H1 (cell line): ENCODE measurements at regions of chr22 and their contacts with region 1.

Region 1: DNA sequence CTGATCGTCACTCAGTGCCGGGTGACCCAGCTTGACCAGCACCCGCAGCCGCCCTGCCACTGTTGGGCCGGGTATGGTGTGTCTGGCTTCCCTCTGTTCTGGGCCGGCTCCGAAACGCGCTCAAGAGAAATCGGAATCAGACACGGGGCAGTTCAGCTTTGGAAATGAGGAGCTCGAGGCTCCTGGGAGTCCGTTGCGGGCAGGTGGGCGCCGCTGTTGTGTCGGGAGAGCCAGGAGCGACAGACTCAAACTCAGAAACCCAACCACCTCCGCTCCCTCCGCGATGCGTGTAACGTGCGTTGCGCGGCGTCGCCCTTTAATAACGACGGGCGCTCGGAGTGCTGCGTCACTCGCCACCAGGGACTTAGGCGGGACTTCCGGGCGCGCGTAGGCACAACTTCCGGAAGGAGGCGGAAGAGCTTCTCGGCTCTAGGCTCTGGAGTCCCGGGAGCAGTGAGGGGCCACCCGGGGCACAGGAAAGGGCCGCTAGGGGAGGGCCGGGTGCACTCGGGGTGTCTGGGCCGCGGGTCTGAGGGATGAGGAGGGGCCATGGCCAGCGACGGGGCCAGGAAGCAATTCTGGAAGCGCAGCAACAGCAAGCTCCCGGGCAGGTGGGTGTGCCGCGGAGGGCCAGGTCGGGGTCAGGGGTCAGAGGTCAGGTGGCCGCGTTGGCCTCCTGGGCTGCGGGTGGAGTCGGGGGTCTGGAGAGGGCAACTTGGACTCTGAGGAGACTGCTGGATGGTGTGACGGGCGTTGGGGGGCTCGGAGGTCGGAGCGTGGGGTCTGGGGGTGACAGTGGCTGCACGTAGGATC is at the start of gene TBC1D22A:
- DNase-seq: peak; percentile 63 to 94
- H3K4me3 ChIP-seq: peak within 1 kb of the TSS; percentile 85 to 98 (median 92)
- H3K27ac ChIP-seq: peak within 1 kb of the TSS; percentile 90
- H3K4me1 ChIP-seq: peaks cover 0 to 4% (median 0%) of the 10 kb centered on the region in 4 experiments; a peak in 4 of 7 replicates
- H3K27me3 ChIP-seq: no peaks in the 10 kb centered on the region
- CTCF ChIP-seq: no peak
- EP300 ChIP-seq: peak in 1 of 2 experiments; percentile 83; a peak in 1 of 3 replicates
- POLR2A ChIP-seq: peak; percentile 93 to 96
- RAD21 ChIP-seq: no peak
- total RNA-seq, gene TBC1D22A: 18.4 and 19.0 TPM in 2 replicates

Region 2: DNA sequence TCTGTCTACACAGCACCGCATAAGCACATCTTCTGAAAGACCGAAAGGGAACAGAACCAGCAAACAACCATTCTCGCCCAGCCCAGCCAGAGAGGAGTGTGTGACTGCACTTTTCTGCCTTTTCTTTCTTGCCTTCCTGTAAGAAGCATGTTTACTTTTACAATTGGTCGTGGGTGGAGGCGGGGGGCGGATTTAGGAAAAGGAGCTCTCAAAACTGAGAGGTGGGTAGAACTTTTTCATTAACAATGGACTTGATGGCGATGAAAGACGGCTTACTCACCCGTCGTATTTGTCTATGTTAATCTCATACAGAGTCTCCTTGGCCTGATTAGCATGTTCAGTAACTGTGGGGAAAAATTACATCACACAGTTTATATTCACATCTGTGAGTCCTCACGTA is 51.6 kb before region 1 on chr22:
- CTCF ChIA-PET with region 1: no interaction called
- POLR2A ChIA-PET with region 1: no interaction called
- DNase-seq: no peak
- H3K4me3 ChIP-seq: no peak overlapping the region
- H3K27ac ChIP-seq: no peak overlapping the region
- H3K4me1 ChIP-seq: no peaks in the 10 kb centered on the region
- H3K27me3 ChIP-seq: no peaks in the 10 kb centered on the region
- CTCF ChIP-seq: no peak
- EP300 ChIP-seq: no peak
- POLR2A ChIP-seq: no peak
- RAD21 ChIP-seq: no peak

Region 3: DNA sequence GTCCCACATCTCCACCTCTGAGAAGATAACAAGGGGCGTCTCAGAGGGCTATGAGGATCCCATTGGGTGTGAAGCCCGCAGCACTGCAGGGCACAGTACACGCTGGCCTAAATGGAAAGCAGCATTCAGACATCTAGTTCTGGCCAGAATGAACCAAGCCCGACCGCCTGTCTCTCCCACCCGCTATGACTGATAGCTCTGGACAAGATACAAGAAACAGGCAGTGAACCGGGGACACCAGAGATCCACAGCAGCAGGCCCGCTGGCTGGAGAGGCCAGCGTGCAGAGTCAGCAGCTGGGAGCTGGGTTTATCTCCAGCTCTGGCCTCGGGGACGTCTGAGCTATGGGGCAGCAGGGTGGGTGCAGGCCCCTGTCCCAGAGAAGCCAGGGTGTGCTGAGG is 34.0 kb before region 1 on chr22:
- CTCF ChIA-PET with region 1: interaction called, 5 read pairs
- POLR2A ChIA-PET with region 1: interaction called, 11 read pairs
- DNase-seq: no peak
- H3K4me3 ChIP-seq: no peak overlapping the region
- H3K27ac ChIP-seq: no peak overlapping the region
- H3K4me1 ChIP-seq: peaks cover 0 to 11% (median 9%) of the 10 kb centered on the region in 4 experiments; a peak in 6 of 7 replicates
- H3K27me3 ChIP-seq: no peaks in the 10 kb centered on the region
- CTCF ChIP-seq: no peak
- EP300 ChIP-seq: no peak
- POLR2A ChIP-seq: no peak
- RAD21 ChIP-seq: no peak

Region 4: GRCh38 chr22:46737976-46738646 is 24.3 kb before region 1 on chr22 and contains the start of gene CERK:
- CTCF ChIA-PET with region 1: interaction called, 13 read pairs
- POLR2A ChIA-PET with region 1: interaction called, 22 read pairs
- DNase-seq: peak in 1 of 2 experiments; percentile 74
- H3K4me3 ChIP-seq: peak within 1 kb of the TSS; percentile 55 to 90 (median 80)
- H3K27ac ChIP-seq: no peak within 1 kb of the TSS
- H3K4me1 ChIP-seq: peaks cover 7 to 19% (median 16%) of the 10 kb centered on the region in 4 experiments
- H3K27me3 ChIP-seq: peaks cover 0 to 3% (median 0%) of the 10 kb centered on the region in 4 experiments; a peak in 1 of 7 replicates
- CTCF ChIP-seq: no peak
- EP300 ChIP-seq: no peak
- POLR2A ChIP-seq: no peak
- RAD21 ChIP-seq: no peak
- total RNA-seq, gene CERK: 59.0 TPM in 2 replicates

Region 5: DNA sequence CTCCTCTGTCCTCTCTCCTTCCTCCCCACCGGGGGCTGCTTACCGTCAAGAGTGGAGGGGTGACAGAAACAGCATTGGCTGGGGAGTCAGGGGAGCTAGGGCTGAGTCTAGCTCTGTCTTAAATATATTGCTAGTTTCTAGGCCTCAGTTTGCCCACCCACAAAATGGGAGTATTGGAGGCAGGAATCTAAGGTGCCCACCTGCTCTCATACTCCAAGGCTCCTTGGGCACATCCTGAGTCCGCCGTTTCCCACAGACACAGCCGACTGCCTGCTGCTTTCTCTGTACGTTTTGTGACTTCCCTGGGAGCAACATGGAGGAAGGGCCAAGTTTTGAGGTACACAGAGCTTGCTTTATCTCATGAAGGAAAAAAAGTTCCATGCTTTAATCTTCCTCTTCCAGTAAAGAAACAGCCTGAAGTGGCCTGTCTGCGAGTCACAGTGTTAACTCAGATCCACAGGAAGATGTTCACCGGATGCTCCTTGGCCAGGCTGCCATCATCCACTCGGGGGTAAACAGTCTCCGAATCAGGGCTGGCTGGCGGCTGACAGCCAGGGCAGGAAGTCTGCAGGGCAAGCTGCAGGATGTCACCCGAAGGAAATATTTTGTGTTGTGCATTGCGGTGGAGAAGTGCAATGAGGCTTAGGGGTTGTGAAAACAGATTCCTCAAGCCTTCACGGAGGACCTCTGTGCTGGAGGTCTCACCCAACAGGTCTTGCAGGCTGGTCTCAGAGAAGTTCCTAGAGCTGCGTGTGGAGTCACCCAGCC is 13.4 kb before region 1 on chr22:
- CTCF ChIA-PET with region 1: interaction called, 15 read pairs
- POLR2A ChIA-PET with region 1: interaction called, 25 read pairs
- DNase-seq: no peak
- H3K4me3 ChIP-seq: no peak overlapping the region
- H3K27ac ChIP-seq: no peak overlapping the region
- H3K4me1 ChIP-seq: no peaks in the 10 kb centered on the region
- H3K27me3 ChIP-seq: peaks cover 0 to 4% (median 2%) of the 10 kb centered on the region in 4 experiments; a peak in 5 of 7 replicates
- CTCF ChIP-seq: no peak
- EP300 ChIP-seq: no peak
- POLR2A ChIP-seq: no peak
- RAD21 ChIP-seq: no peak

Region 6: GRCh38 chr22:46774253-46774979 is 12.0 kb after region 1 on chr22:
- CTCF ChIA-PET with region 1: interaction called, 6 read pairs
- POLR2A ChIA-PET with region 1: interaction called, 41 read pairs
- DNase-seq: no peak
- H3K4me3 ChIP-seq: no peak overlapping the region; a peak in 1 of 8 replicates
- H3K27ac ChIP-seq: peak overlapping the region; percentile 27
- H3K4me1 ChIP-seq: peaks cover 0 to 13% (median 7%) of the 10 kb centered on the region in 4 experiments; a peak in 6 of 7 replicates
- H3K27me3 ChIP-seq: no peaks in the 10 kb centered on the region
- CTCF ChIP-seq: no peak
- EP300 ChIP-seq: no peak
- POLR2A ChIP-seq: no peak
- RAD21 ChIP-seq: no peak

Region 7: GRCh38 chr22:47294222-47294532 is 531.7 kb after region 1 on chr22:
- CTCF ChIA-PET with region 1: no interaction called
- POLR2A ChIA-PET with region 1: no interaction called
- DNase-seq: no peak
- H3K4me3 ChIP-seq: no peak overlapping the region
- H3K27ac ChIP-seq: no peak overlapping the region
- H3K4me1 ChIP-seq: no peaks in the 10 kb centered on the region
- H3K27me3 ChIP-seq: no peaks in the 10 kb centered on the region
- CTCF ChIP-seq: no peak
- EP300 ChIP-seq: no peak
- POLR2A ChIP-seq: no peak
- RAD21 ChIP-seq: no peak